ENCODE measurements at regions of chr1 and their contacts with region 1.

Region 1: GRCh38 chr1:10430216-10431069 is at the start of gene CENPS:
- DNase-seq: peak; percentile 72 to 95 (median 92)
- ATAC-seq: peak; percentile 85
- H3K4me3 ChIP-seq: peak within 1 kb of the TSS; percentile 85 to 96
- H3K4me3 Mint-ChIP-seq: peak within 1 kb of the TSS; percentile 89
- H3K27ac ChIP-seq: peak within 1 kb of the TSS; percentile 81 to 86
- H3K27ac Mint-ChIP-seq: peak within 1 kb of the TSS; percentile 91
- H3K4me1 ChIP-seq: peaks cover 18% of the 10 kb centered on the region
- H3K4me1 Mint-ChIP-seq: peaks cover 23% of the 10 kb centered on the region
- H3K27me3 ChIP-seq: no peaks in the 10 kb centered on the region
- H3K27me3 Mint-ChIP-seq: no peaks in the 10 kb centered on the region
- CTCF ChIP-seq: peak; percentile 97
- total RNA-seq, gene CENPS: 2.0 to 3.5 TPM

Region 2: GRCh38 chr1:9874959-9875635 is 555.3 kb before region 1 on chr1:
- CTCF ChIA-PET with region 1: interaction called, 16 read pairs
- POLR2A ChIA-PET with region 1: no interaction called
- intact Hi-C with region 1: loop called (anchors 1 kb)
- DNase-seq: peak; percentile 49 to 85 (median 76)
- ATAC-seq: peak; percentile 99
- H3K4me3 ChIP-seq: no peak overlapping the region
- H3K4me3 Mint-ChIP-seq: peak overlapping the region; percentile 26
- H3K27ac ChIP-seq: no peak overlapping the region
- H3K27ac Mint-ChIP-seq: no peak overlapping the region
- H3K4me1 ChIP-seq: no peaks in the 10 kb centered on the region
- H3K4me1 Mint-ChIP-seq: peaks cover 4% of the 10 kb centered on the region
- H3K27me3 ChIP-seq: no peaks in the 10 kb centered on the region
- H3K27me3 Mint-ChIP-seq: no peaks in the 10 kb centered on the region
- CTCF ChIP-seq: peak; percentile 83

Region 3: GRCh38 chr1:9942939-9943788 is 487.3 kb before region 1 on chr1 and contains the starts of genes LZIC and NMNAT1:
- CTCF ChIA-PET with region 1: no interaction called
- POLR2A ChIA-PET with region 1: no interaction called
- intact Hi-C with region 1: loop called (anchors 1 to 5 kb)
- DNase-seq: peak; percentile 74 to 94 (median 89)
- ATAC-seq: peak; percentile 91
- H3K4me3 ChIP-seq: peak within 1 kb of the TSS; percentile 82 to 88
- H3K4me3 Mint-ChIP-seq: peak within 1 kb of the TSS; percentile 89
- H3K27ac ChIP-seq: peak within 1 kb of the TSS; percentile 88 to 90
- H3K27ac Mint-ChIP-seq: peak within 1 kb of the TSS; percentile 90
- H3K4me1 ChIP-seq: peaks cover 20% of the 10 kb centered on the region
- H3K4me1 Mint-ChIP-seq: peaks cover 31% of the 10 kb centered on the region
- H3K27me3 ChIP-seq: no peaks in the 10 kb centered on the region
- H3K27me3 Mint-ChIP-seq: no peaks in the 10 kb centered on the region
- CTCF ChIP-seq: no peak
- total RNA-seq, gene LZIC: 12.9 to 13.6 TPM
- total RNA-seq, gene NMNAT1: 1.1 to 1.2 TPM

Region 4: DNA sequence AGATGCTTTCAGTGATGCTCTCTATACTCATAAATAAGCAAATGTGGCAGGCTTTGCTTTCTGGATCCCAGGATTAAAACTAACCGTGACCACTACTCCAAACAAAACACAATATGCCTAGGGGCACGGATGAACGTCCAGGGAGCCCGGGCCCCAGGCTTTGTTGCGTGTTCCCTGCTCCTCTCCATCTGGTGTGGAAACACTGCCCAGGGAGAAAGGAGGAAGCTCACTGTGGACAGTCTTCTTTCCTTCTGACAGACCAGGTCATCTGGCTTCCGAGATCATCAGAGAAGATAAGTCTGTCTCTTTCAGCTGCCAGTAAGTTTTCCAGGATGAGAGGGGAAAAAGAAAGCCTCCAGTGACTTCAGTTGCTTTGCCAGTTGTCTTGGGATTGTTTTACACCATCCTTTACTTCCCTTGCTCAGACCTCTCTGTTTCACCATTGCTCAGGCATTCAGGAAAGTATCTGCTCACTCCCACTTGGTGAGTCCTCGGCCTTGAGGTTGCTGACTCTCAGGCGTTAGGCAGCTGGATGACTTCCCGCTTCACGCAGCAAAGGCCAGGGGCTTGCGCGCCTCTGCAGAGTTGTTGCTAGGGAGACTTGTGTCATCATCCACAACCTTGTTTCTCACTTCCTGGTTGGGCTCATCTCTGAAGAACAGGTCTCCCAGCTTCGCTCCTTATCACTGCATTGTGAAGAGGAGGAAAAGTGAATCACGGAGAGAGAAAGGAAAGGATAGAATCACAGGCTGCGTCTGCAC is 52.2 kb before region 1 on chr1:
- CTCF ChIA-PET with region 1: interaction called, 8 read pairs
- POLR2A ChIA-PET with region 1: no interaction called
- intact Hi-C with region 1: loop called (anchors 1 kb)
- DNase-seq: peak in 1 of 9 experiments; percentile 18
- ATAC-seq: no peak
- H3K4me3 ChIP-seq: no peak overlapping the region
- H3K4me3 Mint-ChIP-seq: no peak overlapping the region
- H3K27ac ChIP-seq: no peak overlapping the region
- H3K27ac Mint-ChIP-seq: no peak overlapping the region
- H3K4me1 ChIP-seq: no peaks in the 10 kb centered on the region
- H3K4me1 Mint-ChIP-seq: no peaks in the 10 kb centered on the region
- H3K27me3 ChIP-seq: no peaks in the 10 kb centered on the region
- H3K27me3 Mint-ChIP-seq: no peaks in the 10 kb centered on the region
- CTCF ChIP-seq: no peak

Region 5: GRCh38 chr1:10398734-10399623 is 31.5 kb before region 1 on chr1 and contains the start of gene PGD:
- CTCF ChIA-PET with region 1: interaction called, 5 read pairs
- POLR2A ChIA-PET with region 1: no interaction called
- intact Hi-C with region 1: loop called (anchors 1 kb)
- DNase-seq: peak; percentile 91 to 98 (median 97)
- ATAC-seq: peak; percentile 97
- H3K4me3 ChIP-seq: peak within 1 kb of the TSS; percentile 86 to 97
- H3K4me3 Mint-ChIP-seq: peak within 1 kb of the TSS; percentile 97
- H3K27ac ChIP-seq: peak within 1 kb of the TSS; percentile 57 to 67
- H3K27ac Mint-ChIP-seq: peak within 1 kb of the TSS; percentile 77
- H3K4me1 ChIP-seq: peaks cover 16% of the 10 kb centered on the region
- H3K4me1 Mint-ChIP-seq: peaks cover 22% of the 10 kb centered on the region
- H3K27me3 ChIP-seq: no peaks in the 10 kb centered on the region
- H3K27me3 Mint-ChIP-seq: no peaks in the 10 kb centered on the region
- CTCF ChIP-seq: no peak
- total RNA-seq, gene PGD: 20.2 to 21.7 TPM

Region 6: GRCh38 chr1:10867138-10867721 is 436.8 kb after region 1 on chr1:
- CTCF ChIA-PET with region 1: no interaction called
- POLR2A ChIA-PET with region 1: no interaction called
- intact Hi-C with region 1: loop called (anchors 2 kb)
- DNase-seq: peak; percentile 23 to 82 (median 69)
- ATAC-seq: peak; percentile 81
- H3K4me3 ChIP-seq: peak overlapping the region; percentile 21 to 28
- H3K4me3 Mint-ChIP-seq: peak overlapping the region; percentile 57
- H3K27ac ChIP-seq: no peak overlapping the region
- H3K27ac Mint-ChIP-seq: no peak overlapping the region
- H3K4me1 ChIP-seq: peaks cover 12% of the 10 kb centered on the region
- H3K4me1 Mint-ChIP-seq: peaks cover 19% of the 10 kb centered on the region
- H3K27me3 ChIP-seq: peaks cover 2 to 15% of the 10 kb centered on the region in 2 experiments
- H3K27me3 Mint-ChIP-seq: peaks cover 52% of the 10 kb centered on the region
- CTCF ChIP-seq: peak; percentile 74

Region 7: GRCh38 chr1:11501558-11501897 is 1071.1 kb after region 1 on chr1:
- CTCF ChIA-PET with region 1: no interaction called
- POLR2A ChIA-PET with region 1: no interaction called
- intact Hi-C with region 1: no loop called
- DNase-seq: peak in 4 of 9 experiments; percentile 13 to 53 (median 46)
- ATAC-seq: peak; percentile 56
- H3K4me3 ChIP-seq: no peak overlapping the region
- H3K4me3 Mint-ChIP-seq: no peak overlapping the region
- H3K27ac ChIP-seq: no peak overlapping the region
- H3K27ac Mint-ChIP-seq: no peak overlapping the region
- H3K4me1 ChIP-seq: no peaks in the 10 kb centered on the region
- H3K4me1 Mint-ChIP-seq: no peaks in the 10 kb centered on the region
- H3K27me3 ChIP-seq: no peaks in the 10 kb centered on the region
- H3K27me3 Mint-ChIP-seq: peaks cover 31% of the 10 kb centered on the region
- CTCF ChIP-seq: no peak